ENCODE measurements at regions of chr12 and their contacts with region 1.

Region 1: GRCh38 chr12:21657326-21658077 is at the start of gene LDHB:
- DNase-seq: peak; percentile 98
- H3K4me3 Mint-ChIP-seq: peak within 1 kb of the TSS; percentile 98
- H3K27ac Mint-ChIP-seq: peak within 1 kb of the TSS; percentile 95
- H3K4me1 Mint-ChIP-seq: peaks cover 60% of the 10 kb centered on the region
- H3K27me3 Mint-ChIP-seq: no peaks in the 10 kb centered on the region
- total RNA-seq, gene LDHB: 1,684 to 1,884 TPM

Region 2: GRCh38 chr12:21438643-21439042 is 218.9 kb before region 1 on chr12:
- CTCF ChIA-PET with region 1: no interaction called
- POLR2A ChIA-PET with region 1: interaction called, 17 read pairs
- intact Hi-C with region 1: loop called (anchors 1 kb)
- DNase-seq: no peak
- H3K4me3 Mint-ChIP-seq: peak overlapping the region; percentile 93
- H3K27ac Mint-ChIP-seq: peak overlapping the region; percentile 96
- H3K4me1 Mint-ChIP-seq: peaks cover 39% of the 10 kb centered on the region
- H3K27me3 Mint-ChIP-seq: no peaks in the 10 kb centered on the region

Region 3: GRCh38 chr12:21725754-21726153 is 68.3 kb after region 1 on chr12:
- CTCF ChIA-PET with region 1: no interaction called
- POLR2A ChIA-PET with region 1: no interaction called
- intact Hi-C with region 1: no loop called
- DNase-seq: no peak
- H3K4me3 Mint-ChIP-seq: no peak overlapping the region
- H3K27ac Mint-ChIP-seq: no peak overlapping the region
- H3K4me1 Mint-ChIP-seq: no peaks in the 10 kb centered on the region
- H3K27me3 Mint-ChIP-seq: peaks cover 5% of the 10 kb centered on the region

Measured in activated CD4-positive, alpha-beta memory T cell treated with anti-CD3 and anti-CD28 coated beads for 36 hours (primary cell).